ENCODE measurements at regions of chr5 and their contacts with region 1.

Region 1: DNA sequence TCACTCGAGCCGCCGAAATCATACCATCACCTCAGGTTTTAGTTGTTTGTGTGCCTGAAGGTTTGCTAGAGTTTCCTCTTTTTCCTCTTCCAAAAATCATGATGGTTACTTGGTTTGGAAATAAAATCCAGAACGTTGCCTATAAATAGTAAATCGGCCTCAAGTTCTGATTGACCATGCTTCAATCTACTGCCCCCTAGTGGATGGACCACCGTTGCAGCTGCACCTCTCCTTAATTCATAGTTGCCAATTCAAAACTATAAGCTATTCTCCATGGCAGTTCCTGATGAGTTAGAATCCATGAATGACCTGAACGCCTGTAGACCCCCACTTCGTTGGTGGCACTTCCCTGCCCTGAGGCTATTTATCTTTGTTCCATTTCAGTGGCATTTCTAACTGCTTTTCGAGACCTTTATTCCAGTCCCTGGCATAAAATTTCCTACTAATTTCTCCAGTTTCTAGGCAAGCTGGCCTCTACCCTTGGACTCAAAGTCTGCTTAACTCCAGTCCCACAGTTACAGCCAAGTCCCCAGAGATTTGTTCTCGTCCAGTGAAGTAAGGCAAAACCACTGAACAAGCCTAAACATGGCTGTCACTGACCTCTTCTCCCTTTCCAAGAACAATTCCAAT is 422.6 kb downstream of the EFNA5 start:
- DNase-seq: peak; percentile 72
- ATAC-seq: no peak
- H3K4me3 Mint-ChIP-seq: no peak overlapping the region
- H3K27ac Mint-ChIP-seq: no peak overlapping the region
- H3K4me1 Mint-ChIP-seq: no peaks in the 10 kb centered on the region
- H3K27me3 Mint-ChIP-seq: peaks cover 4% of the 10 kb centered on the region

Region 2: DNA sequence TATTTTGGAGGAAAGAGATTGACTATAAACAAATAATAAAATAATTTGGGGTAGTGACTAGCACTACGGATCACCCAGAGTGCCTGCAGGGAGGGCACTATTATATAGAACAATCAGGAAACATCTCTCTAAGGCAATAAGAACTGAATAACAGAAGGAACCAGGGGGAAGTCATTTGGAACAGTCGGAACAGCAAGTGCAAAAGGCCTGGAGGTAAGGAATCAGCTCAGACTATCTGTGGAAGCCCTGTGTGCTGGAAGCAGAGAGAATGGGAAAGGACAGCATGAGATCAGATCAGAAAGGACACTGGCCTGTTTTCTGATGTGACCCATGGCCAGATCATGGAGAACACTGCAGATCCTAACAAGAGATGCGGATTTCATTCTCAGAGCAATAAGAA is 64.9 kb after region 1 on chr5:
- CTCF ChIA-PET with region 1: no interaction called
- POLR2A ChIA-PET with region 1: no interaction called
- intact Hi-C with region 1: no loop called
- DNase-seq: no peak
- ATAC-seq: no peak
- H3K4me3 Mint-ChIP-seq: no peak overlapping the region
- H3K27ac Mint-ChIP-seq: no peak overlapping the region
- H3K4me1 Mint-ChIP-seq: no peaks in the 10 kb centered on the region
- H3K27me3 Mint-ChIP-seq: peaks cover 9% of the 10 kb centered on the region

Region 3: DNA sequence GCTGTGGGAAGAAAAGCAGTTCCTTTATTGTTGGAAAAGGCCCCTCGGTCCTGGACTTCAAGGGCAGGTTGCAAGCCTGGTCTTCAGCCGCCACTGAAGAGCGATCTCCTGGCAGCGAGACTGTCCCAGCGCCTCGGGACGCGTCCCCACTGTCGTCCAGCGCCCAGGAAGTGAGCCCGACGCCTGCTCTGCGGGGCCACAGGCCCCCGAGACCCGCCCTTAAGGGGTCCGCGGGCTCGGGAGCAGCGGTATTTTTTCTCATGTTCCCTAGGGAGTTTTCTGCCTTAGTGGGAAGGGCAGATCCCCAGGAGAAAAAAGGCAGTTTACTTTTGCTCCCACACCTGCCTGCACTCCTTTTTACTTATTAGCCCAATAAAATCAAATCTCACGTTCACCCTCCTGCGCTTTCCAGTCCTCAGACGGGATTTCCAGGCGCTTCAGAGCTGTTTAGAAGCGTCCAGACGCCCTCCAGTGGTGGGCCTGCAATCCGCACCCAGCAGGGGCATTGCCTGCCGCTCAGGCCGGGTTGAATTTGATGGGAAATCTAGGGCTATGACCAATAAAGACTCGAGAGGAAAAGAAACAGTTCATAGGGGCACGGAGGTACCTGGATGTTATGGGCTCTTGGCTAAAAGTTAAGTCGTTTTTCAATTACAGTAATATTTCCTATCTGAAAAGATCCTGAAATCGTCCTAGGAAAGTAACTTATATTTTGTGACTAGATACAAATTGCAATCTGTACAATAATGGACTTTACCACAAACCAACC is 425.4 kb after region 1 on chr5:
- CTCF ChIA-PET with region 1: interaction called, 5 read pairs
- POLR2A ChIA-PET with region 1: no interaction called
- intact Hi-C with region 1: loop called in 1 of 2 experiments (anchors 5 kb)
- DNase-seq: peak; percentile 90
- ATAC-seq: peak; percentile 76
- H3K4me3 Mint-ChIP-seq: peak overlapping the region; percentile 67
- H3K27ac Mint-ChIP-seq: no peak overlapping the region
- H3K4me1 Mint-ChIP-seq: peaks cover 31% of the 10 kb centered on the region
- H3K27me3 Mint-ChIP-seq: peaks cover 56% of the 10 kb centered on the region

Measured in activated CD4-positive, alpha-beta T cell treated with anti-CD3 and anti-CD28 coated beads for 36 hours (primary cell).